Cardiac septum (tissue), 1 donor: ENCODE measurements at regions of chr7 and their contacts with region 1.

Region 1: DNA sequence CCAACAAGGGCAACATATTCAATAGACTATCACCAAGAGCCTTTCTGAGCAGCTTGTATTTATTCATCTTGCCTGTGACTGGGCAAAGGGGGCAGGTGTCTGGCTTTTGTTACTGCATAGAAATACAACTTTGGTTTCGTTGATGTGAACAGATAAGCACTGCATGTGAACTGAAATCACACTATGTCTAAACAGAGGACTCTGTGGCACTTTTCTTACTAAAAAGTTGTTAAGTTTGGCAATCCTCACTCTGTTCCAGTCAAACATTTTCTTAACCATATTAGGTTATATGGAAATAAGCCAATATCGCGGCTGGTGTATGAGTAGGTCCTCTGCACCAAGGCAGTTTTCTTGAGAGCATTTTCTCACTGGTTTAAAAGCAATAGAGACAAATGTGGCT is 48.5 kb downstream of the CALD1 start:
- DNase-seq: no peak

Region 2: GRCh38 chr7:134789967-134790685 is 37.8 kb before region 1 on chr7:
- intact Hi-C with region 1: loop called (anchors 2 kb)
- DNase-seq: no peak